AG04450 (cell line): ENCODE measurements at regions of chr1 and their contacts with region 1.

Region 1: GRCh38 chr1:5509664-5510452 is 482.4 kb downstream of the NPHP4 start:
- DNase-seq: no peak
- H3K4me3 ChIP-seq: no peak overlapping the region
- H3K27ac ChIP-seq: no peak overlapping the region
- H3K27me3 ChIP-seq: no peaks in the 10 kb centered on the region
- CTCF ChIP-seq: peak; percentile 87

Region 2: GRCh38 chr1:5231541-5232315 is 278.1 kb before region 1 on chr1:
- CTCF ChIA-PET with region 1: no interaction called
- POLR2A ChIA-PET with region 1: no interaction called
- DNase-seq: no peak
- H3K4me3 ChIP-seq: no peak overlapping the region
- H3K27ac ChIP-seq: no peak overlapping the region
- H3K27me3 ChIP-seq: no peaks in the 10 kb centered on the region
- CTCF ChIP-seq: no peak

Region 3: DNA sequence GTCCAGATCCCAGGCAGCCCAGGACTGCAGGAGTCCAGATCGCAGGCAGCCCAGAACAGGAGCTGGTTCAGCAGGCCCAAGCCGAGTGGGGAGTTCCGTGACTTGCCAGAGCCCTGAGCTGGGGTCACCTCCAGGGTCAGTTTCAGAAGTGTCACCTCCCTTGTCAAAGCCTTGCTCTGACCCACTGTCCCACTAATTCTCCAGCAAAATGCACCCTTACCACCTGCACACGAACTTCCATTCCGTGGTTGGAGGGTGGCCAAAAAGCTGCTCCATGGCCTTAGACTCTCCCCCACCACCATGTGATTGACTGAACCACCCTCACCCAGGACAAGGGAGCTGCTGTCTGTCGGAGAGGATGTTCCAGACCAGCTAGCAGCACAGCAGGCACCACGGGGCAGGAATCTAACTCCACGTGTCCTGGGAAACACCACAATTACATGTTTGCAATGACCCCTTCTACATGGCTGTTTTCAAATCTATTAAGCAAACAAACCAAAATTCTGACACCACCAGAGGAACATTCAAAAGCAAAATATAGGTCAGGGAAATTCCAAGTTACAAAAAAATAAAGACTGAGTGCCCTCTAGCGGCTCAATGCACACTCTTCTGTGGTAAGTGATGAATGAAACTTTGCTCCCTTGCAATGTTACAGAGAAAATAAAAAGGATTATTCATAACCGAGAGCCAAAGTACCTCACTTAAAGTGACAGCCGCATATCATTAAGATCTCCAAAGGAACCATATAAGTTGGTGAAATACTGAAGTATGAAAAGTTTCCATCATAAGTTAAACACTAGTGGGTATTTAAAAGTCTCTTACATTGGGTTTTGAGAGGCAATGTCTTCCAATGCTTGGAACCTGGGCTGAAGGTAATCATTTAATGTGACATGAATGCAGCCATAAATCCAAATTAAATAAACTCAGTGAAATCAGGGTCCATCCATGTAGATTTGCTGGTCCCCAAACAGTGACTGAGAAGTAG is 406.0 kb after region 1 on chr1:
- CTCF ChIA-PET with region 1: interaction called, 42 read pairs
- POLR2A ChIA-PET with region 1: no interaction called
- DNase-seq: peak; percentile 37
- H3K4me3 ChIP-seq: no peak overlapping the region
- H3K27ac ChIP-seq: no peak overlapping the region
- H3K27me3 ChIP-seq: no peaks in the 10 kb centered on the region
- CTCF ChIP-seq: peak; percentile 80

Region 4: GRCh38 chr1:5975133-5975880 is 465.4 kb after region 1 on chr1:
- CTCF ChIA-PET with region 1: interaction called, 122 read pairs
- POLR2A ChIA-PET with region 1: no interaction called
- DNase-seq: peak; percentile 30
- H3K4me3 ChIP-seq: no peak overlapping the region
- H3K27ac ChIP-seq: no peak overlapping the region
- H3K27me3 ChIP-seq: no peaks in the 10 kb centered on the region
- CTCF ChIP-seq: peak; percentile 91

Region 5: GRCh38 chr1:5983361-5984103 is 473.7 kb after region 1 on chr1:
- CTCF ChIA-PET with region 1: interaction called, 12 read pairs
- POLR2A ChIA-PET with region 1: no interaction called
- DNase-seq: peak; percentile 64
- H3K4me3 ChIP-seq: no peak overlapping the region
- H3K27ac ChIP-seq: peak overlapping the region; percentile 3
- H3K27me3 ChIP-seq: no peaks in the 10 kb centered on the region
- CTCF ChIP-seq: no peak